ENCODE measurements at regions of chr6 and their contacts with region 1.

Region 1: DNA sequence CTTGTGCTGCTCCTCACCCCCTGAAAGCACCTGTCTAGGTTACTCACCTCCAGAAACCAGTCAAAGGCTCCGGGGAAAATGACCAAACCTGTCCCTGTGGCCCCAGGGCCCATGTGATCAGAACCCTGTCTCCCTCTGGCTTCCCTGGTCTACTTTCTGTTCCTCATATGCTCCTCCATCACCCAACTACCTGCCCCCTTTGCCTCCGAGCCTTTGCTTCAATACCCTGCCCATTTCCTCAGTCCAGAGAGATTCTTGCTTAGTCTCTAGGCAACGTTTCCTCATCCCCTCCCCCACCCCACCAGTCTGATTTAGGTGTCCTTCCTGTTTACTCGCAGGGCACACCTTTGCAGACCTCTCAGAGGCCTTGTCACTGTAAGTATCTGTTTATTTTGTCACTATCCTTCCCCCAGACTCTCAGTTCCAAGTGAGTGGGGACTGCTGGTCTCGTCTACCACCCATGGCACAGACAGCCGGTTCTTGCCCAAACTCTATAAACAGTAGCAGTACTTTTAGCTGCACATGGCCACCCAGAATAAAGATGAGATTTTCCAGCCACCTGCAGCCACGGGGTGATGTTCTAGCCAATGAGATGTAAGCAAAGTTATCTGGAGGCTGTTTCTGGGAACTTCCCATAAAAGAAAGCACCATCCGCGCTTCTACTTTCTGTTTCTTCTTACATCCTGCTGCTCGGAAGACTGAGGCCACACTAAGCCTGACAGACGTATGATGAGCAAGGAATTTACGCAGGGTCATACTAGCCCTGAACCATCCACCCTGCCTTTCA is 13.3 kb downstream of the ELOVL5 start:
- DNase-seq: peak; percentile 80 to 92 (median 86)
- H3K4me3 ChIP-seq: peak overlapping the region; percentile 32 to 66
- H3K4me3 Mint-ChIP-seq: peak overlapping the region; percentile 85 to 96 (median 91)
- H3K27ac ChIP-seq: peak overlapping the region; percentile 88
- H3K27ac Mint-ChIP-seq: peak overlapping the region; percentile 95 to 100 (median 99)
- H3K4me1 ChIP-seq: peaks cover 96% of the 10 kb centered on the region
- H3K4me1 Mint-ChIP-seq: peaks cover 80 to 94% (median 87%) of the 10 kb centered on the region in 4 donors
- H3K27me3 ChIP-seq: no peaks in the 10 kb centered on the region
- H3K27me3 Mint-ChIP-seq: no peaks in the 10 kb centered on the region

Region 2: GRCh38 chr6:52243282-52243893 is 1092.0 kb before region 1 on chr6:
- CTCF ChIA-PET with region 1: no interaction called
- POLR2A ChIA-PET with region 1: no interaction called
- intact Hi-C with region 1: no loop called
- DNase-seq: no peak
- H3K4me3 ChIP-seq: no peak overlapping the region
- H3K4me3 Mint-ChIP-seq: no peak overlapping the region
- H3K27ac ChIP-seq: no peak overlapping the region
- H3K27ac Mint-ChIP-seq: no peak overlapping the region
- H3K4me1 ChIP-seq: no peaks in the 10 kb centered on the region
- H3K4me1 Mint-ChIP-seq: peaks cover 0 to 4% (median 1%) of the 10 kb centered on the region in 4 donors
- H3K27me3 ChIP-seq: no peaks in the 10 kb centered on the region
- H3K27me3 Mint-ChIP-seq: peaks cover 0 to 8% of the 10 kb centered on the region in 2 donors

Region 3: GRCh38 chr6:53794720-53795253 is 459.4 kb after region 1 on chr6 and contains the start of gene LRRC1:
- CTCF ChIA-PET with region 1: no interaction called
- POLR2A ChIA-PET with region 1: no interaction called
- intact Hi-C with region 1: loop called (anchors 10 kb)
- DNase-seq: peak; percentile 79 to 84 (median 84)
- H3K4me3 ChIP-seq: peak within 1 kb of the TSS; percentile 74 to 77
- H3K4me3 Mint-ChIP-seq: peak within 1 kb of the TSS; percentile 94 to 98 (median 97)
- H3K27ac ChIP-seq: peak within 1 kb of the TSS; percentile 41
- H3K27ac Mint-ChIP-seq: peak within 1 kb of the TSS; percentile 81 to 97 (median 91)
- H3K4me1 ChIP-seq: peaks cover 21% of the 10 kb centered on the region
- H3K4me1 Mint-ChIP-seq: peaks cover 14 to 36% (median 28%) of the 10 kb centered on the region in 4 donors
- H3K27me3 ChIP-seq: no peaks in the 10 kb centered on the region
- H3K27me3 Mint-ChIP-seq: peaks cover 2 to 6% of the 10 kb centered on the region in 2 donors
- total RNA-seq, gene LRRC1: 4.6 to 5.2 TPM

Measured in CD4-positive, alpha-beta memory T cell (primary cell).